ENCODE measurements at regions of chr7 and their contacts with region 1.

Region 1: DNA sequence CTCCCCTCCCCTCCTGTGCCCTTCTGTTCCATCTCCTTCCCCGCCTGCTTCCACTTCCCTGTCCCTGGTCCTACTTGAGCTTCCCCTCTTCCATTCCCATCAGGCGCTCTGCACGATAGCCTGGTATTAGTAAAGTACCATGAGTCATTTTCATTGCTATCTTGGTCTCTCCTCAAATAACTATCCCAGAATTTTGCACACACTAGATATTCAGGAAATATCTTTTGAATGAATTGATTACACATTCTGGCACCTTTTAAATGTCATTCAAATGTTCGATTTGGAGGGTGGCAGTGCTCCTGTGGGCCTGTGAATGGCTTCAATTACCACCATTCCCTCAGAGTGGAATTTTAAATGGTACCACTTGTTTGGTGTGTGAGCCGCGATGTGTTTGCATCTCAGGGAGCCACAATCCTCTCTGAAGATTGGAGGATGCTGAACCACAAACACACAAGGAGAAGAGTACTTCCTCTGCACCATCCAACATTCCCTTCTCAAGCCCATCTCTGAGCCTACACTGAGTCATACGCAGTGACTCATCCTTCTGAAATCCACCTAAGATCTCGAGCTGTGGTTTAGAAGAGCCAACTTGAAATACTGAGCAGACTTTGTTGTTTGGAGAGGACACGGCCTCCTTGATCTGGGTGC is 81.7 kb downstream of the BMPER start:
- DNase-seq: no peak
- ATAC-seq: peak; percentile 98

Region 2: GRCh38 chr7:34091323-34091917 is 104.4 kb after region 1 on chr7:
- intact Hi-C with region 1: loop called (anchors 10 kb)
- DNase-seq: no peak
- ATAC-seq: peak; percentile 48